Caco-2 (cell line): ENCODE measurements at regions of chr4 and their contacts with region 1.

Region 1: DNA sequence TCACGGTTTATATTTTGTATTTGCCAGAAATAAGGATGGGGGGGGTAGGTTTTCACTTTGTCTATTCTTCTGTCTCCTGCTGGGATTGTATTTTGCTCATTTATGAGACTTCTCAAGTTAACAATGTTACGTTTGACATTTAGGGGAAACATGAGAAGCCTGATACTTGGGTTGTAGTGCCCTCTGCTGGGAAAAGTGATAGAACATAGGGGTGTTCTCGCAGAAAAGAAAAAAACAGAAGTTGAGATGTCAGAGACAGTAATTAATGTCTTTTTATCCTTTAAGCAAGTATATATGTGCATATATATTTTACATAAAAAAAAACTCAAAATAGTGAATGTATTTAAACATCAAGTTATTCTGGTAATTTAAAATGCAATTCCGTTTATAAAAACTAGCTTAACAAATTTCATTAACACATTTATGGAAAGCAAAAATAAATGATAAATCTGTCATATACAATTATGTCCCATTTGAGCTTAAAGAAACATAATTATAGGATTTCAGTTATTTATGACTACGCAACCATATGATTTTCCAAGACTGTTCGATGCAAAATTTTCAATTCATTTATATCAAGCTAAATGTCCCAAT is 46.0 kb upstream of the TMPRSS11F start:
- DNase-seq: peak in 1 of 2 experiments; percentile 68
- H3K4me3 ChIP-seq: no peak overlapping the region
- H3K4me3 Mint-ChIP-seq: no peak overlapping the region
- H3K27ac Mint-ChIP-seq: no peak overlapping the region
- H3K4me1 ChIP-seq: no peaks in the 10 kb centered on the region
- H3K4me1 Mint-ChIP-seq: no peaks in the 10 kb centered on the region
- H3K27me3 ChIP-seq: no peaks in the 10 kb centered on the region
- H3K27me3 Mint-ChIP-seq: no peaks in the 10 kb centered on the region
- CTCF ChIP-seq: peak; percentile 52 to 64

Region 2: DNA sequence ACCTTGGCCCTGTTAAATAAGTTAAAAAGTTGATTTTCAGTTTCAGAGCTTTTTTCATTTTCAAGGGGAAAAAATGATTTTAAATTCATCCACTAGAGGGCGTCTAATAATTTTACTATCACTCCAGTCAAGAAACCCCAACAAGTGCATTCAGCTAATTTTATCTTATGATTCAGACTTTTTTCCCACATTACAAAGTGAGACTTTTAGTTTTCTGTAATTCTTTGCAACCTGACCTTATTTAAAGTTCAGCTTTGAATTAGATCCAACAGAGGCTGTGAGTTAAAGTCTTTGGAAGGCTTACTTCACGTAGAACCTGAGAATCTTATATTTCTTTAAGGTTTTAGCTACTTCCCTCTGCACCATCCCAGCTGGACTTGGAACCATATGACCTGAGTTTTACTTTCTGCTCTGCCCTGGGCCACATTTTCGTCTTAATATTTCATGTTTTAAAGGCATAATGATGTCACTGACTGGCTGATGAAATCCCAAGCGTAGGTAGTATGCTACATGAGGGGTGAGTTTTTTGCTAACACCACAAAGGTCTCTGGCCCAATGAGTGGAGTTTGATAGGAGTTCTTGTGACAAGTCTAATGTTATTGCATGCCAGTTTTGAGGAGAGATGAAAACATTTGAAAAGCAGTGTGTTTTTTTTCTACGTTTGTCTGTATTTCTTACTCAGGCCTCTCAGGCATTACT is 428.7 kb before region 1 on chr4:
- CTCF ChIA-PET with region 1: no interaction called
- POLR2A ChIA-PET with region 1: no interaction called
- intact Hi-C with region 1: loop called (anchors 5 kb)
- DNase-seq: peak in 1 of 2 experiments; percentile 8
- H3K4me3 ChIP-seq: no peak overlapping the region
- H3K4me3 Mint-ChIP-seq: no peak overlapping the region
- H3K27ac Mint-ChIP-seq: no peak overlapping the region
- H3K4me1 ChIP-seq: no peaks in the 10 kb centered on the region
- H3K4me1 Mint-ChIP-seq: no peaks in the 10 kb centered on the region
- H3K27me3 ChIP-seq: no peaks in the 10 kb centered on the region
- H3K27me3 Mint-ChIP-seq: no peaks in the 10 kb centered on the region
- CTCF ChIP-seq: peak in 1 of 2 experiments; percentile 52

Region 3: DNA sequence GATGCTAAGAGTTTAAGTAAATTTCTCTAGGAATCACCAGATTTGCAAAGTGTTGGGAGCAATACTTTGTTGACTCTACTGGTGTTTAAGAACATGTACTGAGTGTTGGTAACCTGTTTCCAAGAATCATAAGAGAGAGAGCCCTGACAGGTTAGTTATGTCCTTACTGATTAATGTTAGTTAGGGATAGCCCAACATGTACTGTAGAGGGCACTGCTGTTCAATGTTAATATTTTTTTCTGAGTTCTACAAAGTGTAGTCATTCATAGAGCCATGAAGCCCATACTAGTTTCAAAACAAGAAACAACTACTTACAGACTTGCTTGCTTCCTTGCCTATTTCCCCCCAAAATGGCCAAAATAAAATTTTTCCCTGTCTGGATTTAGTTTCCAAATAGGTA is 303.8 kb before region 1 on chr4:
- CTCF ChIA-PET with region 1: no interaction called
- POLR2A ChIA-PET with region 1: no interaction called
- intact Hi-C with region 1: loop called (anchors 5 kb)
- DNase-seq: peak in 1 of 2 experiments; percentile 32
- H3K4me3 ChIP-seq: no peak overlapping the region
- H3K4me3 Mint-ChIP-seq: no peak overlapping the region
- H3K27ac Mint-ChIP-seq: no peak overlapping the region
- H3K4me1 ChIP-seq: no peaks in the 10 kb centered on the region
- H3K4me1 Mint-ChIP-seq: no peaks in the 10 kb centered on the region
- H3K27me3 ChIP-seq: no peaks in the 10 kb centered on the region
- H3K27me3 Mint-ChIP-seq: peaks cover 3% of the 10 kb centered on the region
- CTCF ChIP-seq: peak; percentile 24 to 32

Region 4: DNA sequence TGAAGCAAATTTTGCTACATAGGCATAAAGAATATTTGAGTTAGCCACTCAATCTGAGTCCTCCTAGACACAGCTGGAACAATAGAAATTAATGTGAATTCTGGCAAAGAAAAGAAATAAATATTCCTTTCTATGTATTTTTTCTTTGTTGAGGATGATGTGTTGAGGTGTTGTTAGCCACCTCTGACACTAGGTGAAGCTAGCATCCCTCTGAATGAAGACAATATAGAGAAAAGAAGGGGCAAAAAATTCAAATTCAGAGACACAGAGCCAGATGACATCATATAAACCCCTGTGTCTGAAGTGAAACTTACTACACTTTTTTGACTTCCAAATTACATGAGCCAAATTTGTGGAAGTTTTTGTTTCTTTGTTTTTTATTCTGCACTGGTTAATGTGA is 257.2 kb before region 1 on chr4:
- CTCF ChIA-PET with region 1: no interaction called
- POLR2A ChIA-PET with region 1: no interaction called
- intact Hi-C with region 1: loop called (anchors 1 kb)
- DNase-seq: no peak
- H3K4me3 ChIP-seq: no peak overlapping the region
- H3K4me3 Mint-ChIP-seq: no peak overlapping the region
- H3K27ac Mint-ChIP-seq: no peak overlapping the region
- H3K4me1 ChIP-seq: no peaks in the 10 kb centered on the region
- H3K4me1 Mint-ChIP-seq: no peaks in the 10 kb centered on the region
- H3K27me3 ChIP-seq: no peaks in the 10 kb centered on the region
- H3K27me3 Mint-ChIP-seq: no peaks in the 10 kb centered on the region
- CTCF ChIP-seq: peak; percentile 33 to 49

Region 5: DNA sequence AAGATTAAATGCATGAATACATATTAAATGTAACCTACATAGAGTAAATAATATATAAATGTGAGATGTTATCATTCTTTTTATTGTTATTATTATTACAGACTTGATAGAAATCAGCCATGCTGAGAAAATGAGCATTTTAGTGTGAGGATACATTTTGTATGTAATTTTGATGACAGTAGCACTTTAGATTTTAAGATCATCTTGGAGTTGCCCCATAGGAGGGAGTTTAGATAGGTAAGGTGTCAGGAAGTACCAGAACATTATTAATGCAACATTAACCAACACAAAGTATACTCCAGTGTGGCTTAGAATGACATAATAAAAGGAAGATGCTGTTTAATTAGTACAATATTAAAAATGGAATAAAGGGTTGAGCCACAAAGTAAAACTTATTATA is 220.8 kb before region 1 on chr4:
- CTCF ChIA-PET with region 1: no interaction called
- POLR2A ChIA-PET with region 1: no interaction called
- intact Hi-C with region 1: no loop called
- DNase-seq: no peak
- H3K4me3 ChIP-seq: no peak overlapping the region
- H3K4me3 Mint-ChIP-seq: no peak overlapping the region
- H3K27ac Mint-ChIP-seq: no peak overlapping the region
- H3K4me1 ChIP-seq: no peaks in the 10 kb centered on the region
- H3K4me1 Mint-ChIP-seq: no peaks in the 10 kb centered on the region
- H3K27me3 ChIP-seq: no peaks in the 10 kb centered on the region
- H3K27me3 Mint-ChIP-seq: peaks cover 3% of the 10 kb centered on the region
- CTCF ChIP-seq: no peak

Region 6: GRCh38 chr4:67988991-67989390 is 186.7 kb before region 1 on chr4:
- CTCF ChIA-PET with region 1: no interaction called
- POLR2A ChIA-PET with region 1: no interaction called
- intact Hi-C with region 1: loop called (anchors 1 kb)
- DNase-seq: no peak
- H3K4me3 ChIP-seq: no peak overlapping the region
- H3K4me3 Mint-ChIP-seq: no peak overlapping the region
- H3K27ac Mint-ChIP-seq: no peak overlapping the region
- H3K4me1 ChIP-seq: no peaks in the 10 kb centered on the region
- H3K4me1 Mint-ChIP-seq: no peaks in the 10 kb centered on the region
- H3K27me3 ChIP-seq: no peaks in the 10 kb centered on the region
- H3K27me3 Mint-ChIP-seq: no peaks in the 10 kb centered on the region
- CTCF ChIP-seq: no peak

Region 7: GRCh38 chr4:68076194-68076593 is 99.5 kb before region 1 on chr4:
- CTCF ChIA-PET with region 1: interaction called, 3 read pairs
- POLR2A ChIA-PET with region 1: no interaction called
- intact Hi-C with region 1: loop called (anchors 1 kb)
- DNase-seq: peak in 1 of 2 experiments; percentile 5
- H3K4me3 ChIP-seq: no peak overlapping the region
- H3K4me3 Mint-ChIP-seq: no peak overlapping the region
- H3K27ac Mint-ChIP-seq: no peak overlapping the region
- H3K4me1 ChIP-seq: no peaks in the 10 kb centered on the region
- H3K4me1 Mint-ChIP-seq: no peaks in the 10 kb centered on the region
- H3K27me3 ChIP-seq: no peaks in the 10 kb centered on the region
- H3K27me3 Mint-ChIP-seq: peaks cover 3% of the 10 kb centered on the region
- CTCF ChIP-seq: peak in 1 of 2 experiments; percentile 18

Region 8: GRCh38 chr4:68141852-68142251 is 33.8 kb before region 1 on chr4:
- CTCF ChIA-PET with region 1: no interaction called
- POLR2A ChIA-PET with region 1: no interaction called
- intact Hi-C with region 1: no loop called
- DNase-seq: no peak
- H3K4me3 ChIP-seq: no peak overlapping the region
- H3K4me3 Mint-ChIP-seq: no peak overlapping the region
- H3K27ac Mint-ChIP-seq: no peak overlapping the region
- H3K4me1 ChIP-seq: 0 out of 2 replicates have a peak, but pooled peaks cover 4% of the 10 kb centered on the region
- H3K4me1 Mint-ChIP-seq: no peaks in the 10 kb centered on the region
- H3K27me3 ChIP-seq: no peaks in the 10 kb centered on the region
- H3K27me3 Mint-ChIP-seq: no peaks in the 10 kb centered on the region
- CTCF ChIP-seq: no peak

Region 9: DNA sequence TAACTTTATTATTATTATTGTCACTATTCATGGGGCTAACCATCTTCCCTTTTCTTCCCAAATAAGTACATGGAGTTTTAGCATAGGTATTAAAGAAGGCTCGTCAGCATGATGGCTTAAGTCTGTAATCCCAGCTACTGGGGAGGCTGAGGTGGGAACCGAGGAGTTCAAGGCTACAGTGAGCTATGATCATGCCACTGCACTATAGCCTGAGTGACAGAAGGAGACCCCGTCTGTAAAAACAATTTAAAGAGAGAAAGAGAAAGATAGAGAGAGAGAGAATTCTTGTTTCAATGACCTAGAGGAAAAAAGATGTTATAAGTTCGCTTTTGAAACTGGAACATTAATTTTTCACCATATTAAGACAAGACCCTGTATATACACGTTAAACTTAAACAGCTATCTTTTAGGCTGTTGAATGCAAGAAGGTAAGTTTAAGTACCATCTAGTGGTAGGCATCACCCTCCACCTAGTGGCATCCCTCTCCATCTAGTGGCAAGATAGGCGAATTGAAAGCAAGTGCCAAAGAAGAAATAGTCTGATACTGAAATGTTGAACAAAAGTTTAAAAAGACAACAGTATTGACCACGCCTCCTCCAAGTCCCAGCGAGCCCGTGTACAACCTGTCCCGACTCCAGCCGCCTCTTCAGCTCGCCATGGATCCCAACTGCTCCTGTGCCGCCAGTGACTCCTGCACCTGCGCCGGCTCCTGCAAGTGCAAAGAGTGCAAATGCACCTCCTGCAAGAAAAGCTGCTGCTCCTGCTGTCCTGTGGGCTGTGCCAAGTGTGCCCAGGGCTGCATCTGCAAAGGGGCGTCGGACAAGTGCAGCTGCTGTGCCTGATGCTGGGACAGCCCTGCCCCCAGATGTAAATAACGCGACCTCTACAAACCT is 200.3 kb after region 1 on chr4:
- CTCF ChIA-PET with region 1: no interaction called
- POLR2A ChIA-PET with region 1: no interaction called
- intact Hi-C with region 1: loop called (anchors 10 kb)
- DNase-seq: peak; percentile 65 to 78
- H3K4me3 ChIP-seq: peak overlapping the region; percentile 50
- H3K4me3 Mint-ChIP-seq: peak overlapping the region; percentile 78
- H3K27ac Mint-ChIP-seq: no peak overlapping the region
- H3K4me1 ChIP-seq: no peaks in the 10 kb centered on the region
- H3K4me1 Mint-ChIP-seq: peaks cover 7% of the 10 kb centered on the region
- H3K27me3 ChIP-seq: no peaks in the 10 kb centered on the region
- H3K27me3 Mint-ChIP-seq: no peaks in the 10 kb centered on the region
- CTCF ChIP-seq: peak; percentile 70 to 84